ENCODE measurements at regions of chr18 and their contacts with region 1.

Region 1: GRCh38 chr18:28541276-28541930 is 364.5 kb upstream of the CDH2 start:
- DNase-seq: no peak
- ATAC-seq: no peak
- H3K4me3 ChIP-seq: no peak overlapping the region
- H3K27ac ChIP-seq: no peak overlapping the region
- H3K4me1 ChIP-seq: no peaks in the 10 kb centered on the region
- H3K27me3 ChIP-seq: no peaks in the 10 kb centered on the region
- CTCF ChIP-seq: no peak
- POLR2A ChIP-seq: no peak
- RAD21 ChIP-seq: no peak

Region 2: DNA sequence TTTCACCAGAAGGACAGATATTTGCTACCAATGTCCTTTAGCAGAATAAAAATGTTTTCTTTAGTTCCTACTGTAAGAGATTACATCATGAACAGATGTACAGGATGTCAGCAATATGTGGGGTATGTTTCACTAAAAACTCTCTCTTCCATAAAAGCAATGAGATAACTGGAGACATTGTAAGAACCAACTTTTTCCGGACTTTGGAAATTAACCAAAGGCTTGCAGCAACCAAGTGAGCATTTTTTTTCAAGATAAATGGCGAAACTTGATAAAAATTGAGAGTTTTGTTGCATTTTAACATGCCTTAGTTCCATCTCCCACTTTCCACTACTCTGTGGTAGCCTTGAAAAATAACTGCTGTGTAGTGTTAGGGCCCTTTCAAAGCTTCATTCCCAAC is 65.3 kb after region 1 on chr18:
- CTCF ChIA-PET with region 1: no interaction called
- POLR2A ChIA-PET with region 1: no interaction called
- RAD21 ChIA-PET with region 1: no interaction called
- intact Hi-C with region 1: loop called (anchors 10 kb)
- DNase-seq: no peak
- ATAC-seq: no peak
- H3K4me3 ChIP-seq: no peak overlapping the region
- H3K27ac ChIP-seq: no peak overlapping the region
- H3K4me1 ChIP-seq: no peaks in the 10 kb centered on the region
- H3K27me3 ChIP-seq: no peaks in the 10 kb centered on the region
- CTCF ChIP-seq: no peak
- POLR2A ChIP-seq: no peak
- RAD21 ChIP-seq: no peak